Astrocyte of the cerebellum (primary cell): ENCODE measurements at regions of chr1 and their contacts with region 1.

Region 1: GRCh38 chr1:85313888-85314696 is 37.7 kb upstream of the BCL10 start:
- DNase-seq: peak; percentile 77
- H3K4me3 ChIP-seq: no peak overlapping the region
- CTCF ChIP-seq: no peak

Region 2: DNA sequence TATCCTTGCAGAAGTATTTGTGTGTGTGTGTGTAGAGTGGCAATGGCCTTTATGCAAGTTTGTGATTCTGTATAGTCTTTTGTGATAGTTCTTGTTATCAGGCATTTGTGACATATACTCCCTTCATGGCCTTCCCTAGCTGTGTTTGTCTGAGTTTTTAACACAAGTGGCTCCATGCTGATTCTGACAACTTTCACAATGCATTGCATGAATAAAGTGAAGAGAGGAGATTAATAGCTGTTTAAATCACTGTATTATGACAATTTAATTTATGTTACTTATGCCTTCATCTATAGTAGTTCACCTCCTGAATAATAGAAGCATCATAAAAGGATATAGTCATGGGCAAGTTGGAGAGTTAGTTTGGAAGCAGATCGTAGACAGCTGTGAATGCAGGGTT is 248.5 kb before region 1 on chr1:
- in situ Hi-C with region 1: no loop called
- DNase-seq: no peak
- H3K4me3 ChIP-seq: no peak overlapping the region
- CTCF ChIP-seq: no peak

Region 3: GRCh38 chr1:85224734-85225623 is 89.1 kb before region 1 on chr1:
- in situ Hi-C with region 1: no loop called
- DNase-seq: no peak
- H3K4me3 ChIP-seq: no peak overlapping the region
- CTCF ChIP-seq: no peak

Region 4: GRCh38 chr1:85398391-85399064 is 84.4 kb after region 1 on chr1:
- in situ Hi-C with region 1: loop called (anchors 5 kb)
- DNase-seq: peak; percentile 36
- H3K4me3 ChIP-seq: no peak overlapping the region
- CTCF ChIP-seq: peak; percentile 35

Region 5: DNA sequence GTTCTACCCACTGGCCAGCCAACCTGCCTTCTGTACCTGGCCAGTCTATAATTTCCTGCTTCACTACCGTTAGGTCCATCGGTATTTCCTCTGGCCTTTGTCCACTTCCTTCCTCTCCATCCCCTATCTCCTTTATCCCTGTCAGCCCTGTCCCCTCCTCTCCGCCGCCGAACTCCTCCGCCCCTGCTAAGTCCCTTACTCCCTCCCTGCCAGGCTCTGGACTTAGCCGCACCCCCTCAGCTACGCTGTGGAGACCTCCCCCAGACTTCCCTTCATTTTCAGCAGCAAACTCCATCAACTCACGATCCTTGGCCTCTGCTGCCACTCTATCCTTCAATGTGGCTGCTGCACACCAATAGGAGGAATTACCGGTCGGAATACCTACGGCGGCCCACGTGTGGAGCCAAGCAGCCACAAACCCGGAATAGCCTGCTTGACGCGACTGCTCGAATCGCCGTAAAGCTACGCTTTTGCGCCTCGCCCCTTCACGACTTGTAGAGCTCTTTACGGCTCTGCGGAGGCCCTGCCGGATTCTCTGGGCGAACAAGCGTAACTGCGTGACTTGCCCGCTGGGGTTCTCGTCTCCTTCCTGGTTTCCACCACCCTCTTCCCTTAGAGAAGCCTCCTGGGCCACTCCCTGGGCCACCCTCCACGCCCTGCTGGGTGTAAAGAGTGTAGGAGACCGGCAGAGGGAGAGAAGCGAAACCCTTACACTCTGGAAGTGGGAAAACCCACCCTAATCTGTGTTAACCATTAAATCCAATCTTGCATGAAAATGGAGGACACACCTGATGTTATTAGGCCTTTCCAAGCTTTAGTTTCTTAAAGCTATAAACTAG is 394.1 kb after region 1 on chr1 and contains the start of gene ZNHIT6:
- in situ Hi-C with region 1: loop called (anchors 10 kb)
- DNase-seq: peak; percentile 88
- H3K4me3 ChIP-seq: peak within 1 kb of the TSS; percentile 87
- CTCF ChIP-seq: peak; percentile 48